Dorsolateral prefrontal cortex (tissue), 120 donors: ENCODE measurements at regions of chr11 and their contacts with region 1.

Region 1: GRCh38 chr11:92224407-92225124 is at the start of gene FAT3:
- DNase-seq: peak in 9 of 10 donors; percentile 7 to 76 (median 54)
- H3K4me3 ChIP-seq: peak within 1 kb of the TSS; percentile 29 to 76 (median 62)
- H3K27ac ChIP-seq: peak within 1 kb of the TSS in 58 of 59 donors; percentile 8 to 93 (median 80)
- H3K27me3 ChIP-seq: peaks cover 0 to 84% (median 4%) of the 10 kb centered on the region in 45 donors
- CTCF ChIP-seq: peak in 2 of 56 donors; percentile 8 to 10
- total RNA-seq, gene FAT3: 28.1 to 164 (median 104) TPM

Region 2: GRCh38 chr11:92048415-92048814 is 176.2 kb before region 1 on chr11:
- intact Hi-C with region 1: no loop called
- DNase-seq: no peak
- H3K4me3 ChIP-seq: no peak overlapping the region
- H3K27ac ChIP-seq: no peak overlapping the region
- H3K27me3 ChIP-seq: no peaks in the 10 kb centered on the region
- CTCF ChIP-seq: no peak

Region 3: GRCh38 chr11:92141159-92141558 is 83.4 kb before region 1 on chr11:
- intact Hi-C with region 1: no loop called
- DNase-seq: no peak
- H3K4me3 ChIP-seq: no peak overlapping the region
- H3K27ac ChIP-seq: no peak overlapping the region
- H3K27me3 ChIP-seq: no peaks in the 10 kb centered on the region
- CTCF ChIP-seq: no peak

Region 4: DNA sequence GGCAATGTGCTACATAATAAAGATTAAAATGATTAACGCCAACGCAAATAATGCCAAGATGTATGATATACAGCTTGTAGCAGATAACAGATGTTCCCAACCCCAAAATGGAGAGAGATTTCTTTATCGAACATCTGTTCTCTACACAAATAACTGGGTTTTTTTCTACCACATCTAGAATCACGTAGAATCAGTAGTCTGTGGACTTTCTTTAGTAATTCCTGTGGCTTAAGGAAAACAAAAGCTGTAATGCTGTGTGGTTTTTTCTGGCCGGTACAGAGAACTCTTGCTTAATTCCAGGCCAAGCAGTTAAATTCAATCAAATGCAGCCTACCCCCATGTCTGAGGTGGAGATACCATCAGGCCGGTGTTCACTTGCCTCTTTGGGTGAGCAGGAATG is 303.4 kb after region 1 on chr11:
- intact Hi-C with region 1: no loop called
- DNase-seq: no peak
- H3K4me3 ChIP-seq: no peak overlapping the region
- H3K27ac ChIP-seq: no peak overlapping the region
- H3K27me3 ChIP-seq: no peaks in the 10 kb centered on the region
- CTCF ChIP-seq: no peak

Region 5: DNA sequence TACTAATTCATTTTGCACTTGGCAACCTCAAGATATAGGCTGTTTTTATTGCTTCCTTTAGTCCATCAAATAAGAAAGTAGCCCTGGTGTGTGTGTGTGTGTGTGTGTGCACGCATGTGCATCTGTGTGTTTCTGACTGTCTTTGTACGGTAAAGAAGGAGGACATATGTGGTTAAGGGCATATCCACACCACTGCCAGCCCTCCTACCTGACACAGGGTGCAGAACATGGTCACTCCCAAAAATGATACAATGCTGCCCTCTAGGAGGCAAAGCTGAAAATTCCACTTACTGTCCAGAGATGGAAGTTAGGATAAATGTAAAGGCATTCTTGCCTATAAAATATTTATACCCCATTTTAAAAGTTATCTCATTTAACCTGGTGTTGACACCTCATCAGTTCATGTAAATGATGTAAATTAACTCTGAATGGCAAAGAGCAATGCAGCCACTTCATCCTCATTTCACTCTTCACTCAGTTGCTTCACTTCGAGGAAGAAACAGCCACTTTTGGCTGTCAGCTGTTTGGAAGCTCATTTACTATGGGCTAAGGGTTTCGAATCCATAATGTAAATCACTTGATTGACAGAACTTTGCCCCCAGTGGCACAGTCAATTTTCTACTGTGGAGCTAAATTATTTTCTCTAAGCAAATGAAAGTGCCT is 661.8 kb after region 1 on chr11:
- intact Hi-C with region 1: loop called in 1 of 2 experiments (anchors 10 kb)
- DNase-seq: peak in 3 of 10 donors; percentile 27 to 59 (median 58)
- H3K4me3 ChIP-seq: no peak overlapping the region
- H3K27ac ChIP-seq: no peak overlapping the region
- H3K27me3 ChIP-seq: no peaks in the 10 kb centered on the region
- CTCF ChIP-seq: peak; percentile 41 to 85 (median 68)